Activated CD4-positive, alpha-beta T cell treated with anti-CD3 and anti-CD28 coated beads, Interleukin-2, amount 10 ng/mL, durations not matched to agents 24 days and 14 days (primary cell): ENCODE measurements at regions of chr7 and their contacts with region 1.

Region 1: GRCh38 chr7:135977007-135977741 is at the start of gene MTPN:
- DNase-seq: peak; percentile 99
- H3K4me3 Mint-ChIP-seq: peak within 1 kb of the TSS; percentile 95
- H3K27ac Mint-ChIP-seq: peak within 1 kb of the TSS; percentile 86
- H3K4me1 Mint-ChIP-seq: peaks cover 61% of the 10 kb centered on the region
- H3K27me3 Mint-ChIP-seq: no peaks in the 10 kb centered on the region
- total RNA-seq, gene MTPN: 121 and 126 TPM in 2 replicates

Region 2: GRCh38 chr7:135211179-135211945 is 765.8 kb before region 1 on chr7 and contains the start of gene WDR91:
- intact Hi-C with region 1: loop called (anchors 5 kb)
- DNase-seq: peak; percentile 96
- H3K4me3 Mint-ChIP-seq: peak within 1 kb of the TSS; percentile 95
- H3K27ac Mint-ChIP-seq: peak within 1 kb of the TSS; percentile 98
- H3K4me1 Mint-ChIP-seq: peaks cover 29% of the 10 kb centered on the region
- H3K27me3 Mint-ChIP-seq: no peaks in the 10 kb centered on the region
- total RNA-seq, gene WDR91: 25.8 and 26.6 TPM in 2 replicates

Region 3: GRCh38 chr7:135662373-135663114 is 314.6 kb before region 1 on chr7 and contains the start of gene STMP1:
- intact Hi-C with region 1: loop called (anchors 1 kb)
- DNase-seq: peak; percentile 99
- H3K4me3 Mint-ChIP-seq: peak within 1 kb of the TSS; percentile 94
- H3K27ac Mint-ChIP-seq: peak within 1 kb of the TSS; percentile 91
- H3K4me1 Mint-ChIP-seq: peaks cover 33% of the 10 kb centered on the region
- H3K27me3 Mint-ChIP-seq: no peaks in the 10 kb centered on the region
- total RNA-seq, gene STMP1: 23.5 and 25.8 TPM in 2 replicates

Region 4: DNA sequence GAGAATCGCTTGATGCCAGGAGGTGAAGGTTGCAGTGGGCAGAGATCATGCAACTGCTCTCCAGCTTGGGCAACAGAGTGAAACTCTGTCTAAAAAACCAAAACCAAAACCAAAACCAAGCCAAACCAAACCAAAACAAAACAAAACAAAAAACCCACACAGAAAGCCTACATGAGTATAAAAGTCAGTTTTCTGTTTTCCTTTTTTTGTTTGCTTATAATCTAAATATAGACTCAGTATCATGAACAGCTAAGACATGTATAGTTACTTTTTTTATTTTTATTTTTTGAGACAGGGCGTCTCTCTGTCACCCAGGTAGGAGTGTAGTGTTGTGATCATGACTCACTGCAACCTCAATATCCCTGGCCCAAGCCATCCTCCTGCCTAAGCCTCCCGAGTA is 16.8 kb after region 1 on chr7:
- intact Hi-C with region 1: loop called (anchors 1 kb)
- DNase-seq: peak; percentile 68
- H3K4me3 Mint-ChIP-seq: no peak overlapping the region
- H3K27ac Mint-ChIP-seq: no peak overlapping the region
- H3K4me1 Mint-ChIP-seq: peaks cover 22% of the 10 kb centered on the region
- H3K27me3 Mint-ChIP-seq: peaks cover 4% of the 10 kb centered on the region

Region 5: GRCh38 chr7:136016649-136017395 is 39.6 kb after region 1 on chr7:
- intact Hi-C with region 1: no loop called
- DNase-seq: no peak
- H3K4me3 Mint-ChIP-seq: no peak overlapping the region
- H3K27ac Mint-ChIP-seq: no peak overlapping the region
- H3K4me1 Mint-ChIP-seq: peaks cover 3% of the 10 kb centered on the region
- H3K27me3 Mint-ChIP-seq: peaks cover 8% of the 10 kb centered on the region

Region 6: DNA sequence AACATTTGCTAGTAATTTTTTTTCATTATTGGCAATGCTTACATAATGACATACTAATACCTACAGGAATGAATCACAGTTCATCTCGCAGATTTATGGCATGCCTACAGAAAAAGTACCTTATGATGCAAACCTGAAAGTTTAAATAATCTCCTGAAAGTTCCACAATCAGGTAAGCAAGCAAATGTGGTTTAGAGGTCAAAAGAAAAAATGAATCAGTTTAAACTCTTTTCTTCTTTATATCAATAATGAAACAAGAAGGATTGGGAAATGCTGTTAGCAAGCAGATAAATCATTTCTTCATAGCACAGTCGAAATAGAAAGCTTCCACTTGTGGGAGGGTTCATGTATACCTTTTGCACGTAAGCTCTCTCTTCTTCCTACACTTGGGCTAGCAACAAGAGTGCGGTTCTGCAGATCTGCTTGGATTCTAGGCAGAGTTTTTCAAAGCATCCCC is 53.7 kb after region 1 on chr7:
- intact Hi-C with region 1: loop called (anchors 1 kb)
- DNase-seq: peak; percentile 57
- H3K4me3 Mint-ChIP-seq: peak overlapping the region; percentile 27
- H3K27ac Mint-ChIP-seq: peak overlapping the region; percentile 77
- H3K4me1 Mint-ChIP-seq: peaks cover 13% of the 10 kb centered on the region
- H3K27me3 Mint-ChIP-seq: no peaks in the 10 kb centered on the region